ENCODE measurements at regions of chr10 and their contacts with region 1.

Region 1: GRCh38 chr10:8278099-8278498 is 223.6 kb downstream of the GATA3 start:
- DNase-seq: no peak
- ATAC-seq: no peak
- H3K4me3 Mint-ChIP-seq: no peak overlapping the region
- H3K27ac Mint-ChIP-seq: no peak overlapping the region
- H3K4me1 Mint-ChIP-seq: peaks cover 18% of the 10 kb centered on the region
- H3K27me3 Mint-ChIP-seq: peaks cover 5% of the 10 kb centered on the region

Region 2: DNA sequence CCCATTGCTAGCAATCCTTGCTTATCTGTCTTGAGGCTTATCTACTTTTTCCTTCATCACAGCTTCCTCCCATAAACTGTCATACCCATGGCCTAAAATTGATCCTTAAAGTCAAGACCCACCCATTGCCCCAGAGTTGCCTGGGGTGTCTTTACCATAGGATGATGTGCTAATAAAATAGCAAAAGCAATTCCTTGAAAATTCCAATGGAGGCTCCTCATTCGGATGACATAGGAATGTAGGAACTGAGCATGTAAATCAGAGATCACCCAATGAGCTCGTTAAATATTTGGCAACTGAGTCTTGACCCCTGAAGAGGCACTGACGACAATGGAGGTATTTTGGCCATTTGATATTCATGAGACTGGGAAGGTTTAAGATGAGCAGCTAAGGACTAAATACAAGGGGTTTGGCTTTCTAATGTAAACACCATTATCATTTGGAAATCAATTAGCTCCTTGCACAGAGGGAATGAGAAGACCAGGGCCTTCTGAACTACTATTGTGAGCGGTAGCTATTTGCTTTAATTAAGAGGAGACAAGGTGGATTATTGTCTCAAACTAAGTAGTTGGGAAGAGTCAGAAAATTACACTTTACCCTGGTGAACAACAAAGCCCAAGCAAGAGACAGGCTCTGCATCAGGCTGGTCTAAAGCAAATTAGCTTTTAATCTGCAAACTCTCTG is 11.3 kb after region 1 on chr10:
- CTCF ChIA-PET with region 1: interaction called, 11 read pairs
- POLR2A ChIA-PET with region 1: no interaction called
- DNase-seq: no peak
- ATAC-seq: no peak
- H3K4me3 Mint-ChIP-seq: no peak overlapping the region
- H3K27ac Mint-ChIP-seq: no peak overlapping the region
- H3K4me1 Mint-ChIP-seq: no peaks in the 10 kb centered on the region
- H3K27me3 Mint-ChIP-seq: peaks cover 10% of the 10 kb centered on the region